Activated CD4-positive, alpha-beta T cell treated with anti-CD3 and anti-CD28 coated beads, Interleukin-2, amount 10 ng/mL, durations not matched to agents 24 days and 14 days (primary cell): ENCODE measurements at regions of chr16 and their contacts with region 1.

Region 1: DNA sequence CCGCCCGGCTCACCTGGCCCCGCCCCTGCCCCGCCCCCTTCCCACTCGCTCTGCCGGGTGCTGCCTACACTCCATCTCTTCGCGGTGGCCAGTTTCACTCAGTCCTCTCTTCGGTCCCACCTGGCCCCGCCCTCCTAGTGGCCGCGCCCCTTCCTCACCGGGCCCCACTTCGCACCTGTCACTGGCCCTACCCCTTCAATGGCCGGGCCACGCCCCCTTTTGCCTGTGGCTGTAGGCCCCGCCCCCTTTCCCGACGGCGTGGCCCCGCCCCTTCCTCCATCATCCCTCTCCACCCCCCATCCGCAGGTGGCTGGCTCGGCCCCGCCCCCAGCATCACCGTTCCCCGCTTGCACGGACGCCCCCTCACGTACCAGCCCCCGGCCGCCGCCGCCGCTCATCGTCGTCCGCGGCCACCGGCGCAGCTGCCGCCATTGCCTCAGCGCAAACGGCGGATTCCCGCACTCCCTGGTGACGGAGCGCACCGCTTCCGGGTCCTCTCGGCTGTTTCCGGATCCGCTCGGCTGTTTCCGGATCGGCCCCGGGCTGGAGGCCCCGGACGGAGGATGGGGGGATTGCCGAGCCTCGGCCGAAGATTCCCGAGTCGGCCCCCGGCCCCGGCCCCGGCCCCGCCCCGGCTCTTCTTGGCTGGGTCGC is at the start of gene RABEP2:
- DNase-seq: peak; percentile 99
- H3K4me3 Mint-ChIP-seq: peak within 1 kb of the TSS; percentile 92
- H3K27ac Mint-ChIP-seq: peak within 1 kb of the TSS; percentile 96
- H3K4me1 Mint-ChIP-seq: peaks cover 19% of the 10 kb centered on the region
- H3K27me3 Mint-ChIP-seq: no peaks in the 10 kb centered on the region
- total RNA-seq, gene RABEP2: 20.5 and 23.7 TPM in 2 replicates

Region 2: DNA sequence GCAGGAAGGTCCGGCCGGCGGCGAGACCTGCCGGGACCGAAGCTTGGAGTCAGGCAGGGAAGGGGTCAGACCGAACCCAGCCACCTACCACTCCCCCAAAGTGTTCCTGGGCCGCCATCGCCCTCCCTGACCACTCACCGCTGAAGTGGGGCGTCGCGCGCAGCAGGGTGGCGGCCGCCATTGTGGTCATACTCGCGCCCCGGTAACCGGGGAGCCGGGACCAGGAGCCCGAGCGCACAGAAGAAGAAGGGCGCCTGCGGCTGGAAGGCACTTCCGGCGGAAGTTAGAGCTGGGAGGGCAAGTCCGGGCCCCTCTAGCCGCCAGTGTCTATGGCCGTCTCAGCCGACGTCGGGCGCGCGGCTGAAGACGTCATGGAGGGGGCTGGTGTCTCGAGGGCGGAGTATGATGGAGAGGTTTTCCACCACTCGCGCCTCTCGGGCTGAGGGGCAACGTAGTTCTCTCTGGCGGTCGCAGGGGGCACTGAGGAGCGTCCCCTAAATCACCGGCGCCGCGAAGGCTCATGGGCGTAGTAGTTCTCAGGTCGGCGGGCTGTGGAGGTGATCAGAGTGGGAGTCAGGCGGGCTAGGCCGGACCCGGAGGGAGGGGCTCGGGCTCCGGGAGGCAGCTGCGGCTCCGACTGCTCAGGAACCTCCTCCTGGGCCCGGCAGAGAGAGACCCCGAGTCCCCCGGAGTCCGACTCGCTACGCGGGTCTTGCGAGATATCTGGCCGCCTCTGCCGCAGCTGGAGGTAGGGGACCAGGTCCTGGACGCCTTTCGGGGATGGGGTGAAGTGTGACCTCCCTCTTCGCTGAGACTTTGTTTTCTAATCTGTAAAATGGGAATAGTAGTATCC is 78.6 kb before region 1 on chr16 and contains the start of gene TUFM:
- intact Hi-C with region 1: loop called (anchors 2 kb)
- DNase-seq: peak; percentile 100
- H3K4me3 Mint-ChIP-seq: peak within 1 kb of the TSS; percentile 94
- H3K27ac Mint-ChIP-seq: peak within 1 kb of the TSS; percentile 98
- H3K4me1 Mint-ChIP-seq: peaks cover 25% of the 10 kb centered on the region
- H3K27me3 Mint-ChIP-seq: no peaks in the 10 kb centered on the region
- total RNA-seq, gene TUFM: 276 and 279 TPM in 2 replicates

Region 3: GRCh38 chr16:28879841-28880588 is 44.8 kb before region 1 on chr16:
- intact Hi-C with region 1: loop called (anchors 5 kb)
- DNase-seq: peak; percentile 95
- H3K4me3 Mint-ChIP-seq: peak overlapping the region; percentile 96
- H3K27ac Mint-ChIP-seq: peak overlapping the region; percentile 81
- H3K4me1 Mint-ChIP-seq: peaks cover 21% of the 10 kb centered on the region
- H3K27me3 Mint-ChIP-seq: no peaks in the 10 kb centered on the region

Region 4: GRCh38 chr16:28943281-28943680 is 18.4 kb after region 1 on chr16:
- intact Hi-C with region 1: loop called (anchors 1 kb)
- DNase-seq: no peak
- H3K4me3 Mint-ChIP-seq: no peak overlapping the region
- H3K27ac Mint-ChIP-seq: no peak overlapping the region
- H3K4me1 Mint-ChIP-seq: peaks cover 15% of the 10 kb centered on the region
- H3K27me3 Mint-ChIP-seq: peaks cover 2% of the 10 kb centered on the region